Psoas muscle (tissue), 8 donors: ENCODE measurements at regions of chr2 and their contacts with region 1.

Region 1: GRCh38 chr2:238263204-238264071 is 23.6 kb upstream of the HES6 start:
- DNase-seq: peak; percentile 91 to 95
- ATAC-seq: peak; percentile 82 to 95 (median 90)
- H3K4me3 ChIP-seq: no peak overlapping the region
- H3K27ac ChIP-seq: peak overlapping the region; percentile 48
- H3K4me1 ChIP-seq: peaks cover 19% of the 10 kb centered on the region
- H3K27me3 ChIP-seq: no peaks in the 10 kb centered on the region
- CTCF ChIP-seq: peak; percentile 86

Region 2: DNA sequence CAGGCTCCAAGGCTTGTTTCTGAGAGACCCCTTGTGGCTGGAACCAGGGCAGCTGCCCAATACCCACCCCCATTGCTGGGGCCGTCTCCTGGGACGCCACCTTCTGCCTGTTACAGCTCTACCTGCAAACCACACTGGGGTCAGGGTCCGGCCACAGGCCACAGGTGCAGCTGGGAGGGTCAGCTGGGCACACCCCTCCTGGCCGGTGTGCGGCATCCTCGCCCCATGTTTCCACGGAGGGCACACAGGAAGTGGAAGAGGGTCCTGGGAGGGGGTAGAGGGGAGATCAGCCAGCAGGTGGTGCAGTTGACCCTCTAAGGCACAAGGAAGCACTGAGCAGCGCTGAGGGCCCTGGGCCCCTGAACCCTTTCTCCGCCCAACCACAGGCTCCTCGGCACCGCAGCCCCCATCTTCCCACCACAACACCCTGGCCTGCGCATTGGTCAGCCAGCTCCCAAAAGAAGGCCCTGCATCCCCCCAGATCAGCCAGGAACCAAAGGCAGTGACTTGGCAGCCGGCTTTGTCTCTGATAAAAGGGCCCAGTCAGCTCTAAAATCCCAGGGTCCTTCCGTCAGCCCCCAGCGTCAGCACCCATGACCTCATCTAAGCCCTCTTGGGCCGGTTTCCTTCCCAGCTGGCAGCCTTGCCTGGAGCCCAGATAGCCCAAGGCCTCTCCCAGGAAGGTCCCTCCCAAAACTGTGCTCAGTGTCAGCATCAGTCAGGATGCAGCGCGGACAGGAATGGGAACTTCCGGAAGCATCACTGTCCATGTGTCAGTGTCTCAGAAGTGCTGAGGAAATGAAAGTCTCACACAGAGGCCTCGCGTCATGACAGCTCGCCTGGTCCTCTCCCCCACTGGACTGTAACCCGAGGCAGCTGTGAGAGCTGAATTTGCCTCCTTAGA is 103.0 kb before region 1 on chr2:
- intact Hi-C with region 1: loop called (anchors 5 kb)
- DNase-seq: peak; percentile 17 to 57
- ATAC-seq: peak in 2 of 4 donors; percentile 2 to 11
- H3K4me3 ChIP-seq: no peak overlapping the region
- H3K27ac ChIP-seq: no peak overlapping the region
- H3K4me1 ChIP-seq: peaks cover 11% of the 10 kb centered on the region
- H3K27me3 ChIP-seq: peaks cover 0 to 28% (median 5%) of the 10 kb centered on the region in 3 donors
- CTCF ChIP-seq: peak; percentile 8

Region 3: GRCh38 chr2:238203094-238203972 is 60.1 kb before region 1 on chr2 and contains the start of gene ILKAP:
- intact Hi-C with region 1: loop called (anchors 5 kb)
- DNase-seq: peak; percentile 92 to 95
- ATAC-seq: peak; percentile 96 to 99 (median 98)
- H3K4me3 ChIP-seq: peak within 1 kb of the TSS; percentile 82
- H3K27ac ChIP-seq: peak within 1 kb of the TSS; percentile 96
- H3K4me1 ChIP-seq: peaks cover 34% of the 10 kb centered on the region
- H3K27me3 ChIP-seq: no peaks in the 10 kb centered on the region
- CTCF ChIP-seq: no peak
- total RNA-seq, gene ILKAP: 31.8 to 43.8 (median 39.3) TPM

Region 4: DNA sequence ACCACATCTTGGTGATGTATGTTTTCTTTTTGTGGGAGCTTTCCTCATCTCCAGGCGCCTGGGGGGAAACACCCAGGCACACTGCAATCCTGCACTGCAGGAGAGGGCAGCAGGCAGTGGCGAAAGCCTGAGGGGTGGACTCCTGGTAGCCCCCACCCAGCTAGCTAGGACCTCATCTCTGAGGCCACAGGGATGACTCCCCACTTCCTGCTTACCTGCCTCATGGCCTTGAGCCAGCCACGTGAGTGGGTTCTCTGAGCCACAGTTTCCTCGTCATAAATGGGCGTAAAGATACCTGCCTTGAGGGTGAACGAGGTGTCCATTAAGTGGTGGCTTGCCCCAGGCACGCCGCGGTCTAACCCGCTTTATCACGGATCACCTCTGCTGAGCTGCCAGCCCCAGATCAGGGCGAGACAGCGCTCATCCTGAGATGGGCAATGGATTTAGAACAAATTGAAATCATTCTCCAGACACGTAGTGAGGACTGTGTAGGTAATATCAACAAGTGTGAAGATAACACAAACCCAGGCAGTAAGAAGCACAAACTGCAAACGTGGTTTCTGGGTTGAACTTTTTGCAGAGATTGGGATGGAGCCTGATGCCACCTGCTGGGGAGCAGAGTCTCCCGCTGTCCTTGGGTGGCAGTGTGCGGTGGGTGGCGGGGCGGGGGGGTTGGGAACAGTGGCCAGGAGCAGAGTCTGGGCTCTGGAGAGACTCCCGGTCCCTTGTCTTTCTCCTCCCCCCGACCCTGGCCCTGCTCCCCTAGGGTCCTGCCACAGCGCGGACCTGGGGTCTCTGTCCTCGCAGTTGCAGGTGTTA is 76.2 kb after region 1 on chr2:
- intact Hi-C with region 1: loop called in 1 of 2 experiments (anchors 5 kb)
- DNase-seq: no peak
- ATAC-seq: peak; percentile 69 to 79 (median 72)
- H3K4me3 ChIP-seq: no peak overlapping the region
- H3K27ac ChIP-seq: peak overlapping the region; percentile 65
- H3K4me1 ChIP-seq: peaks cover 31% of the 10 kb centered on the region
- H3K27me3 ChIP-seq: no peaks in the 10 kb centered on the region
- CTCF ChIP-seq: peak; percentile 48